ENCODE measurements at regions of chr3 and their contacts with region 1.

Region 1: DNA sequence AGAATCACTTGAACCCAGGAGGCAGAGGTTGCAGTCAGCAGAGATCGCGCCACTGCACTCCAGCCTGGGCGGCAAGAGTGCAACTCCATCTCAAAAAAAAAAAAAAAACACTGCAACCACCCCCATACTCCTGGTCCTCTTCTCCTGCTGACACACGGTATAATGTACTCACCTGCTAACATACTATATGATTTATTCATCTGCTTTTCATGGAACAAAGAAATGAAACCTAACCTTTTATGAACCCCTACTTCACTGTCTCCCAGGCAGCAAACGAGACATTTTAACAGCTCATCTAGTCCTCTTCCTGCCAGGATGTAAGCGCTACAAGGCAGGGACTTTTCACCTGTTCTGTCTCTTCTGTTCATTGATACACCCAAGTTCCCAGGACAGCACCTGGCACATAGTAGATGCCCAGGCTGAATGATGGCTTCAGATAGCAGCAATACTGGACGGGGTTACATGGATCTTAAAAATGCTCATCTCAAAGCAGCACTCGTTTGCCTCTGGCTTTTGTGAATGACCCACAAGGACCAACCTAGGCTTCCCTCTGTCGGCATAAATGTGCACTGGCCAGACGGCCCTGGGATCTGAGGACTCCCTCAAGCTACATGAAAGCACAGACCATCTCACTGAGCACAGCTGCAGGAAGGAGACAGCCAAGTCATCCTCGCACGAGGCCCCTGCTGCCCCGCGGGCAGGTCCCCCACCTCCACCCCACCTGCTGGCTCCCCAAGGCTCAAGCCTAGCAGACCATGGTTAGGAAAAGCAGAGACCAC is 20.3 kb downstream of the XXYLT1 start:
- DNase-seq: peak in 1 of 2 donors; percentile 55
- ATAC-seq: peak; percentile 38 to 75 (median 70)
- H3K4me3 ChIP-seq: no peak overlapping the region
- H3K27ac ChIP-seq: no peak overlapping the region
- H3K4me1 ChIP-seq: peaks cover 0 to 14% (median 3%) of the 10 kb centered on the region in 9 donors
- H3K27me3 ChIP-seq: no peaks in the 10 kb centered on the region
- CTCF ChIP-seq: peak in 8 of 9 donors; percentile 13 to 60 (median 46)

Region 2: DNA sequence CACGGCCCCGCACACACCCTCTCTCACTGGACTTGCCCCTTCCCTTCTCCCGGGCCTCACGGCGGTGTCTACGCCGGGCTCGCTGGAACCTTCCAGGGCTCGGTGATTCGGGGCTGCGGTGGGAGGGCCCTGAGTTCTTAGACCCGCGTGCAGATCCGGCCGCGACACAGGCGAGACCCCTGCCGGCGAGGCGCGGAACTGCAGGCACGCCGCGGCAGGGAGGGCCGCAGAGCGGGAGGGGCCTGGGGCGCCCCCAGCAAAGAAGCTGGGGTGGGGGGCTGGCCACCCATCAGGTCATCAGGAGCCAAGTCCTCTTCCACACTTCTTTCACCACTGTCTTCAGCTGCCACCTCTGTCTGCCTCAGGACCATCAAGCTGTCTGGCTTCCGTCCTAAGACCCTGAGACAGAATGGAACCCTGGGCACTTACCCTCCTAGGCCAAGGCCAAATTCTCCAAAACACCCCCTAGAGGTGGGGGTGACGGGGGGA is 144.2 kb before region 1 on chr3:
- intact Hi-C with region 1: loop called in 4 of 10 experiments (anchors 5 kb)
- DNase-seq: peak; percentile 66 to 80
- ATAC-seq: peak; percentile 65 to 86 (median 80)
- H3K4me3 ChIP-seq: peak overlapping the region in 7 of 10 donors; percentile 2 to 44 (median 32)
- H3K27ac ChIP-seq: peak overlapping the region in 2 of 10 donors; percentile 10 to 44
- H3K4me1 ChIP-seq: peaks cover 7 to 41% (median 19%) of the 10 kb centered on the region in 9 donors
- H3K27me3 ChIP-seq: no peaks in the 10 kb centered on the region
- CTCF ChIP-seq: peak; percentile 99 to 100 (median 100)

Region 3: GRCh38 chr3:195117978-195118581 is 132.6 kb before region 1 on chr3:
- intact Hi-C with region 1: loop called in 7 of 10 experiments (anchors 5 to 10 kb)
- DNase-seq: no peak
- ATAC-seq: peak in 5 of 8 donors; percentile 19 to 45 (median 35)
- H3K4me3 ChIP-seq: no peak overlapping the region
- H3K27ac ChIP-seq: peak overlapping the region in 3 of 10 donors; percentile 16 to 40 (median 38)
- H3K4me1 ChIP-seq: peaks cover 3 to 45% (median 19%) of the 10 kb centered on the region in 9 donors
- H3K27me3 ChIP-seq: no peaks in the 10 kb centered on the region
- CTCF ChIP-seq: peak in 4 of 9 donors; percentile 16 to 42 (median 29)

Region 4: GRCh38 chr3:195129644-195130492 is 120.8 kb before region 1 on chr3:
- intact Hi-C with region 1: loop called in 3 of 10 experiments (anchors 5 to 10 kb)
- DNase-seq: no peak
- ATAC-seq: no peak
- H3K4me3 ChIP-seq: no peak overlapping the region
- H3K27ac ChIP-seq: no peak overlapping the region
- H3K4me1 ChIP-seq: peaks cover 2 to 18% (median 10%) of the 10 kb centered on the region in 9 donors
- H3K27me3 ChIP-seq: no peaks in the 10 kb centered on the region
- CTCF ChIP-seq: no peak

Measured in heart right ventricle (tissue), 16 donors.